Adrenal gland (tissue), 19 donors: ENCODE measurements at regions of chr6 and their contacts with region 1.

Region 1: DNA sequence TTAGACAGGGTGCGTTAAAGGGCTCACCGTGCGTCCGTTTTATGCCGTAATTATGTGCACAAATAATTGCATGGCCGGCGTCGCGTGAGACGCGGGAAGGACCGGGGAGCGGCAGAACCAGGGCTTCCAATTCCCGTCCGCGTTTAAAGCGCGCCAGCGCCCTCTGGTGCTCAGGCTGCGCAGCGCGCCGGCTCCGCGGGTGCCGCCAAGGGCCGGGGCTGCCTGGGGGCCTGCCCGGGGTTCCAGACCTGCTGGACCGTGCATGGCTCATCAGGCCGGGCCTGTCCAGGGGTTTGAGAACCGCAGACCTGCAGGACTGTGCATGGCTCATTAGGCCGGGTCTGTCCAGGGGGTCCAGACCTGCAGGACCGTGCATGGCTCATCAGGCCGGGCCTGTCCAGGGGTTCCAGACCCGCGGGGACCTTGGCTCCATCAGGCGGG is 369.0 kb downstream of the THBS2 start:
- DNase-seq: peak; percentile 39 to 70 (median 61)
- H3K4me3 ChIP-seq: peak overlapping the region in 1 of 4 donors; percentile 40
- H3K27ac ChIP-seq: no peak overlapping the region
- H3K4me1 ChIP-seq: no peaks in the 10 kb centered on the region
- H3K27me3 ChIP-seq: no peaks in the 10 kb centered on the region
- CTCF ChIP-seq: peak; percentile 62 to 90 (median 78)
- POLR2A ChIP-seq: no peak

Region 2: DNA sequence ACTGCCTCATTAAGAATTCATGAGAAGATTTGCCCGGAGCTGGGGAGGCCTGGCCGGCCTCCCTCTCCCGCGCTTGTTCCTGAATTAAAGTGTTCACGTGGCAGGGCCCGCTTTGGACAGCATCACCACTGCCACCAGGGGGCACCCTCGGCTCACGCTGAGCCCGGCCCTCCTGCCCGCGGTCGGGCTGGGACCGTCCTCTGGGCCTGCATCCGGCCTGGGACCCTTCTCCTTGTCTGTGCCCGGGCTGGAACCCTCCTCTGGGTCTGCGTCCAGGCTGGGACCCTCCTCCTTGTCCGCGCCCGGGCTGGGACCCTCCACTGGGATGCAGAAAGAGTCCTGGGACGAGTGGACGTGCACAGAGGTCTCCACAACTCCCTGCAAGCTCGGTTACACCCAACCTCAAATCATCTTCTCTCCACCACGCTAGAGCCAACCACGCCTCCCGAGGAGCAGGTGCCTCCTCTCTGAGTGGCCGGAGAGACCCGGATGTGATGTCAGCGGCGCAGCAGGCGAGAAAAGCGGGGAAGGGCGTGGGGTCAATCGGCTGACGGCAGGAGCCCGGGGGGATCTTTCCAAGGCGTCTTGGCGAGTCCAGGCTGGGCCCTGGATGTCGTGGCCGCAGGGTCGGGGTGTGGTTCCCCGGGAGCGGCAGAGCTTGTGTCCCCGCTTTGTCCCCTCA is 514.2 kb before region 1 on chr6:
- intact Hi-C with region 1: loop called (anchors 1 to 5 kb)
- DNase-seq: peak; percentile 26 to 74 (median 57)
- H3K4me3 ChIP-seq: no peak overlapping the region
- H3K27ac ChIP-seq: no peak overlapping the region
- H3K4me1 ChIP-seq: peaks cover 0 to 5% of the 10 kb centered on the region in 2 donors
- H3K27me3 ChIP-seq: no peaks in the 10 kb centered on the region
- CTCF ChIP-seq: peak; percentile 53 to 78 (median 62)
- POLR2A ChIP-seq: no peak

Region 3: DNA sequence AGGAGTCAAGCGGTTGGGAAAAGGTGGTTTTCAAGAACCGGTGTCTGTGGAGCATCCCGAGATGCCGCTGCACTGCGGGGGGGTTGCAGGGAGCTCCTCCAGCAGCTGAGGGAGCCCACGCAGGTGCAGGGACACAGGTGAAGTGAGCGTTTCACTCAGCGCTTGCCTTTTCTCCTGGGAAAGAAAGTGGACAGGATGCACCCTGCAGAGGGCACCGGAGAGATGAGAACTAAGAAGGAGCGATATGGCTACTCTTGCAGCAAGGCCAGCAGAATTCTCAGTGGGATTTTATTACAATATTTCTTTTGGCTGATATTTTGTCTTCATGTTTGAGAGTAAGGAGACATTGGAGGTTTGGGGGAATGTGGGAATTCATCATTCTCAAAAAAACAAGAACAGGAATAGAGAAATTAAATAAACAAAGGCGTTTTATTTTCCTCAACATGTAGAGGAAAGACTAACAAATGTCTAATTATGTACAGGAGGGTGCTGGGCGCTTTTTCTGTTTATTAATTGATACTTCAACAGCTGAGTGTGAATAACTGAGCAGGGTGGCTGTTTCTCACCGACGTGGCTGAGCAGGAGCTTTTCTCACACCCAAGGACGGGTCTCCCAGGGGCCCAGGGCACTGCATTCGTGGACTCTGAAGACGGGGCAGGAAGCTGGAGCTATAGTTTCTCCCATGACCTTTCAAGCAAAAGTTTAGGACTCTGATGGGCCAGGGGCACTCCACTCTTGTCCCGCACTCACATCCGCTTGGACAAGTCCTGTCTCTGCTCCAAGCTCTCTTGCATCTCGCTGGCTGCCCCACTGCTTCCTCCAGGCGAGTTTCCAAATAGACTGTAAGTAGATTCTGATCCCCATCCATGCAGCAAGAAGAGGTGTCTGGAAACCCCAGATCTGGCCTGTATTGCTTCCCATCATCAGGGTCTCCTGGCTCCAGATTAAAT is 267.6 kb before region 1 on chr6:
- intact Hi-C with region 1: loop called in 1 of 2 experiments (anchors 10 kb)
- DNase-seq: peak in 2 of 7 donors; percentile 35 to 48
- H3K4me3 ChIP-seq: no peak overlapping the region
- H3K27ac ChIP-seq: no peak overlapping the region
- H3K4me1 ChIP-seq: no peaks in the 10 kb centered on the region
- H3K27me3 ChIP-seq: no peaks in the 10 kb centered on the region
- CTCF ChIP-seq: peak in 5 of 6 experiments; percentile 18 to 41 (median 37)
- POLR2A ChIP-seq: no peak

Region 4: DNA sequence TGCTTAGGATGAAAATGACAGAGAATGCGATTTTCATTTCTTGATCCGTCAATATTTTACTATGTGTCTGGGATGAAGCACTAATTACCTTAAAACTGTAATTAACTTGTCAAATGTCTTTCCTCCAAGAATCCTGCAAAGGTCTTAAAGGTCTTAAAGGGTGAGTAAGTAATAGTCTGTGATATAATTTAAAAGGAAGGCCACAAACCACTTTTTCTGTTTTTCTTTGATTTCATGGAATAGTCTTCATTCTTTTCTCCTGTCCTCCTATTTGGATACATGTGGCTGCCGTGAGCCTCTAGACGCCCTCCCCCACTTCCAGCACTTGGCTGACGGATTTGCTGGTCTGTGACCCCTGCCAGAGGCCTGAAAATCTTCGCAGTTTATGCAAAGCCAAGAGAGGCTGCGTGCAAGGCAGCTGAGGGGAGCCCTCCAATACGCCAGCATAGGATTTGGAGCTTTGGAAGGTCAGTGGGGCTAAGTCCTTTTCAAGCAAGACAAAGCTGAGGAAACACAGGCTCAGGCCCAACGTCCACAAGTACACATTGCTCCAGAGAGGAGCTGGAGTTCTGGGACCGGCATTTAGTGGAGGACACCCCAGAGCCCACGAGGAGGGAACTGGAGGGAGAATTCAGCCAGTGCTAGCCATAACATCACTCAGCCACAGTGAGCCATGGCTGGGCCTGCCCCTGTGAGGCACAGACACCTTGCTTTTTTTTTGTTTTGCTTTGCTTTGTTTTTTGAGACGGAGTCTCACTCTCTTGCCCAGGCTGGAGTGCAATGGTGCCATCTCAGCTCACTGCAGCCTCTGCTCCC is 61.1 kb before region 1 on chr6:
- intact Hi-C with region 1: no loop called
- DNase-seq: no peak
- H3K4me3 ChIP-seq: no peak overlapping the region
- H3K27ac ChIP-seq: no peak overlapping the region
- H3K4me1 ChIP-seq: no peaks in the 10 kb centered on the region
- H3K27me3 ChIP-seq: no peaks in the 10 kb centered on the region
- CTCF ChIP-seq: no peak
- POLR2A ChIP-seq: no peak